Posterior cingulate gyrus (tissue), 11 donors: ENCODE measurements at regions of chr15 and their contacts with region 1.

Region 1: GRCh38 chr15:66619151-66619903 is 53.5 kb upstream of the LCTL start:
- DNase-seq: peak; percentile 26 to 94 (median 66)

Region 2: DNA sequence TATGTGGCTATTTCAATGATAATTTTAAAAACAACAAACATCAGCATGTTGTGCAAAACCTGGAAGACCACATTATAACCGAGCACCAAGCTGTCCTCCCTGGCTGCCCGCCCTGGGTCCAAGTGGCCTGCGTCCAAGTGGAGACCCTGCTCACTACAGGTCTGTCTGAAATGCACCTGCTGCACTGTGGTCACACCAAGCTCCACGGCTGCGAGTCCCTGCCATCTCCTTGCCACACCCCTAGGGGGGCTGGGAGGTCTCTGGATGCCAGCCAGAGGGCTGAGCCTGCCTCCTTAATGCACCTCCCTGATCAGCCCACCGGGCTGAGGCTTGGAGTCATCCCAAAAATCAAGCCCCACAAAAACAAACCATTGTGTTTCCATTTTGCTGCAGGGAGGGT is 552.9 kb before region 1 on chr15:
- intact Hi-C with region 1: no loop called
- DNase-seq: peak in 2 of 10 donors; percentile 60 to 78

Region 3: DNA sequence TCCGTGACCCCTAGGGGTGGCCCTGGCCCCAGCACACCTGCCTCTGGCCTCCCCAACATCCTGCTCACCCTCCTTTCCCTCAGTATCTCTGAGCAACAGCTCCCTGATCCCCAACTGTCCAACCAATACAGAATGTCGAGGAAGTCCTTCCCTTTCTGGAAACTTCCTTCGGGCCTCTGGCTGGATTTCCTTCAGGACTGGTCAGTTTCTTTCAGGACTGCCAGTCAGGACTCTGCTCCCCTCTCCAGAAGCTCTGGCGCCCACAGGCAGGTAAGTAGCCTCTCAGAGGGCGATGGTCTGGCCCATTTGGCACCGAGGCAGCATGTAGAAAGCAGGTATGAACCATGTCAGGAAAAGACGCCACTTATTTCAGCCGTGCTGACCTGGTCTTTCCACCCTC is 416.8 kb before region 1 on chr15:
- intact Hi-C with region 1: no loop called
- DNase-seq: peak in 1 of 10 donors; percentile 43

Region 4: DNA sequence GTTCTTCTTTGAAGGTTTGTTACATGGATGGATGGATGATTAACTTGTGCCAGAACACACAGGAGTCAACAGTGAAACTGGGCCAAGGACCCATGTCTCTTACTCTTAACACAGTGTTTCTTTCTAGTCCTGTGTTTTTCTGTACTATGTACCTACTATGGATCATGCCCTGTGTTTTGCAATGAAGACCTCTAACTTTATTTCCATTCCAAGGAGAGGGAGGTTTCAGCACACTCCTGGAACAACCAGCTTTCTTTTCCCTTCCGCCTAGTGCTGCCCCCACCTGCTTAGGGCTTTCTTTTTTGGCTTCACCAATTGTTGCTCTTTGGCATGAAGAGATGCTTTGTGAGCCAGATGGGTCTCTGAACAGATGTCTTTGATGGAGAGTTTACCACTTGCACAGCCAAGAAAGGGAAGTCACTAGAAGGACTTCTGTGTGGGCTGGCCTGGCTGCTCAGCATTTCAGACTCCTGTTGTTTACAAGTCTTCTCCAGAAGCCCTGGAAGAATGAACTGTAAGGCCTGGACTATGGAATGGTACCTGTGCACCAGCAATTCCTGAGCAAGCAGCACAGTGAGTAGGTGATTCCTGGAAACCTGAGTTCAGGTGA is 166.3 kb before region 1 on chr15:
- intact Hi-C with region 1: no loop called
- DNase-seq: peak in 4 of 10 donors; percentile 10 to 86 (median 18)

Region 5: GRCh38 chr15:66700802-66701421 is 81.6 kb after region 1 on chr15:
- intact Hi-C with region 1: loop called (anchors 5 kb)
- DNase-seq: peak; percentile 58 to 95 (median 74)

Region 6: DNA sequence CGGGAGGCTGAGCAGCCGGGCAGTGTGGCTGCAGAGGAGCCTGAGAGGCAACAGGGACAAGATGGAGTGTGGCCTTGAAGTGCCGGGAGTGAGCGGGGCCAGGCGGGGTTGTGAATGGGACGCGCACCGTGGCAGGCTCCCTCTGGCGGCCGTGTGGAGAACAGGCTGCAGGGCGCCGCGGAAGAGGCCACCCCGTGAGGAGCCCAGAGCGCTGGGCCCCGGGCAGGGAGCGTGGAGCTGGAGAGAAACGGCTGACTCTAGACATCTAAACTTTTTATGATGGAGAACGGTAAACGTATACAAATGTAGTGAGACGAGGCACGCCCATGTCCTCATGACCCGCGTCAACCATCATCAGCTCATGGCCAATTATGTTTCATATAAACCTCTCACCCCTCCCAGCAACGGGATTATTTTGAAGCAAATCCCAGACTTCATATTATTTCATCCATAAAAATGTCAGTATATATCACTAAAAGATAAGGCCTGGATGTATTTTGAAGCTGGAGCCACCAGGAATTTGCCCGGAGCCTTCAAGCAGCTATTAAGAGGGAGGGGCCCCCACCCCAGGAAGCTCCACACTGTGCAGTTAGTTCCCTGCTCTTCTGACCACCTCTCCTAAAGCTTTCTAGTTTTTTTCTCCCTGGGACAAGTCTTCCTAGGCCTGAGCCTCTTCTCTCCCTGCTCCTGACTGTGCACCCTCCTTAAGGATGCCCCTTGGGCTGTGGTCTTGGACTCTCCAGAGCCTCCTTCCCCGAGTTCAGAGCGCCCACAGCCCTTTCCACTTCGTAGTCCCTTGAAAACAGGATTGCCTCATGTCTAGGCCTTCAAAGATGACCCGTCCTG is 232.1 kb after region 1 on chr15:
- intact Hi-C with region 1: loop called (anchors 2 kb)
- DNase-seq: peak in 9 of 10 donors; percentile 46 to 93 (median 68)

Region 7: GRCh38 chr15:66894986-66895780 is 275.9 kb after region 1 on chr15:
- intact Hi-C with region 1: no loop called
- DNase-seq: no peak